CD8-positive, alpha-beta memory T cell (primary cell): ENCODE measurements at regions of chr7 and their contacts with region 1.

Region 1: GRCh38 chr7:23546897-23547572 is 15.3 kb upstream of the TRA2A start:
- DNase-seq: peak; percentile 53 to 84 (median 80)
- H3K4me3 ChIP-seq: no peak overlapping the region
- H3K4me3 Mint-ChIP-seq: peak overlapping the region in 1 of 7 donors; percentile 33
- H3K27ac ChIP-seq: no peak overlapping the region
- H3K27ac Mint-ChIP-seq: peak overlapping the region in 1 of 8 donors; percentile 64
- H3K4me1 ChIP-seq: no peaks in the 10 kb centered on the region
- H3K4me1 Mint-ChIP-seq: peaks cover 6 to 13% (median 10%) of the 10 kb centered on the region in 3 donors
- H3K27me3 ChIP-seq: no peaks in the 10 kb centered on the region
- H3K27me3 Mint-ChIP-seq: no peaks in the 10 kb centered on the region

Region 2: GRCh38 chr7:23523486-23524075 is 23.5 kb before region 1 on chr7:
- CTCF ChIA-PET with region 1: interaction called, 12 read pairs
- POLR2A ChIA-PET with region 1: no interaction called
- DNase-seq: no peak
- H3K4me3 ChIP-seq: no peak overlapping the region
- H3K4me3 Mint-ChIP-seq: peak overlapping the region in 4 of 7 donors; percentile 1 to 37 (median 18)
- H3K27ac ChIP-seq: no peak overlapping the region
- H3K27ac Mint-ChIP-seq: peak overlapping the region in 3 of 8 donors; percentile 2 to 65 (median 55)
- H3K4me1 ChIP-seq: peaks cover 57% of the 10 kb centered on the region
- H3K4me1 Mint-ChIP-seq: peaks cover 70 to 87% (median 79%) of the 10 kb centered on the region in 3 donors
- H3K27me3 ChIP-seq: no peaks in the 10 kb centered on the region
- H3K27me3 Mint-ChIP-seq: no peaks in the 10 kb centered on the region

Region 3: GRCh38 chr7:23712368-23713284 is 165.6 kb after region 1 on chr7:
- CTCF ChIA-PET with region 1: interaction called, 15 read pairs
- POLR2A ChIA-PET with region 1: no interaction called
- DNase-seq: peak in 2 of 5 donors; percentile 18 to 40
- H3K4me3 ChIP-seq: no peak overlapping the region
- H3K4me3 Mint-ChIP-seq: no peak overlapping the region
- H3K27ac ChIP-seq: no peak overlapping the region
- H3K27ac Mint-ChIP-seq: no peak overlapping the region
- H3K4me1 ChIP-seq: no peaks in the 10 kb centered on the region
- H3K4me1 Mint-ChIP-seq: no peaks in the 10 kb centered on the region
- H3K27me3 ChIP-seq: no peaks in the 10 kb centered on the region
- H3K27me3 Mint-ChIP-seq: peaks cover 0 to 4% of the 10 kb centered on the region in 2 donors